Dorsolateral prefrontal cortex (tissue), 120 donors: ENCODE measurements at regions of chr2 and their contacts with region 1.

Region 1: GRCh38 chr2:190408538-190409271 is 550 bp downstream of the MFSD6 start:
- DNase-seq: peak; percentile 45 to 87 (median 78)
- H3K4me3 ChIP-seq: peak overlapping the region; percentile 61 to 91 (median 79)
- H3K27ac ChIP-seq: peak overlapping the region; percentile 72 to 100 (median 97)
- H3K27me3 ChIP-seq: no peaks in the 10 kb centered on the region
- CTCF ChIP-seq: peak in 21 of 56 donors; percentile 4 to 31 (median 20)

Region 2: DNA sequence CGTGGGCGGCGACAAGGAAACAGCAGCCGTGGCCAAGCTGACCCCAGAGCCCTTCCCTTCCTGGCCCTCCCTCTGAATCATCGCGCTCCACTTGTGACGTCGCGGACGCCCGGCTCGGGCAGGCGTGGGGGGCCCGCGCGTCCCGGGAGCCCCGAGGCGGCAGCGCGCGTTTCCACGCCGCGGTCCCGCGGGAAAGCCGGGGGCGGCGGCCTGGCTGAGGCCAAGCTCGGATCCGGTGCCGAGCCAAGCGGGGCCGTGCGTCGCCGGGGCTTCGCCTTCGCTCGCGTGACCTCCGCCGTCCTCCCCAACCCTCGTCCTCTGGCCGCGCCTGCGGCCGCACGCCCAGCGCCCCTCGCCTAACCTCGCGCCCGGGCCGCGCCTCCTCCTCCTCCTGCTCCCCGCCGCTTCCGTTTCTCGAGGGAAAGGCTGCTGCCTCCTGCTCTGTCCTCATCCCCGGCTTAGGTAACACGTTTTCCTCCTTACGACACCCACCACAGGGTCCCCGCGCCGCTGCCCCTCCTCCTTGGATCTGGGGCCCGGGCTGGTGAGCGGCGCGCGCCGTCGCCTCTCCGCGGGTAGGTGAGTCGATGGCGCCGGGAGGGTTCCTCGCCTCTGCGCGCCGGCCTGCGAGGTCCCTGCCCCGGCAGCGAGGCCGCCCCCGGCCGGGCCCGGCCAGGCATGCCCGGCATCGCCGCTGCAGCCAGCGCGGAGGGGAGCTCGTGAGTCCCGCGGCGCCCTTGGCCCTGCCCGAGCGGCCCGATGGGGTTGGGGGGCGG is 65.0 kb before region 1 on chr2 and contains the start of gene INPP1:
- intact Hi-C with region 1: loop called (anchors 5 kb)
- DNase-seq: peak in 9 of 10 donors; percentile 31 to 79 (median 55)
- H3K4me3 ChIP-seq: peak within 1 kb of the TSS; percentile 66 to 94 (median 81)
- H3K27ac ChIP-seq: peak within 1 kb of the TSS; percentile 65 to 98 (median 95)
- H3K27me3 ChIP-seq: no peaks in the 10 kb centered on the region
- CTCF ChIP-seq: no peak
- total RNA-seq, gene INPP1: 32.3 to 82.1 (median 48.4) TPM

Region 3: GRCh38 chr2:190443778-190444481 is 35.2 kb after region 1 on chr2:
- intact Hi-C with region 1: loop called in 1 of 2 experiments (anchors 2 kb)
- DNase-seq: peak in 1 of 10 donors; percentile 26
- H3K4me3 ChIP-seq: no peak overlapping the region
- H3K27ac ChIP-seq: peak overlapping the region in 51 of 59 donors; percentile 2 to 95 (median 67)
- H3K27me3 ChIP-seq: no peaks in the 10 kb centered on the region
- CTCF ChIP-seq: no peak

Region 4: DNA sequence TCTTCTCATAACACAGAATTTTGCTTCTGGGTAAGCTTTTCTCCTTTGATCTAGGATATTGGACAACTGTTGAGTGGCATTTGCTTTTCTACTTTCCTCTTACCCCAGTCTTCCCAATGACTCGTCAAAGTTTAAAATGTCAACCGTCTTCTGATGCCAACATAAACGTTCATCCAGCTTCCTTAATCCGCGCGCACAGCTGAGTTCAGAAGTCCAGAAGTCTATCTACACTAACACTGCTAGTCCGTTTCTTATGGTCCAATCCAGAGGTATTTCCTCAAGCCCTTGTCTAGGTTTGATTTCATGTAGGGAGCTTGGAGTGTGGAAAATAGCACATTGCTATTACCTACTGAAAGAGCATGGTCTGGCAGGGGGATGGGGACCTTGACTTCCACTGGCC is 48.1 kb after region 1 on chr2:
- intact Hi-C with region 1: no loop called
- DNase-seq: no peak
- H3K4me3 ChIP-seq: no peak overlapping the region
- H3K27ac ChIP-seq: peak overlapping the region in 1 of 59 donors; percentile 16
- H3K27me3 ChIP-seq: no peaks in the 10 kb centered on the region
- CTCF ChIP-seq: no peak

Region 5: DNA sequence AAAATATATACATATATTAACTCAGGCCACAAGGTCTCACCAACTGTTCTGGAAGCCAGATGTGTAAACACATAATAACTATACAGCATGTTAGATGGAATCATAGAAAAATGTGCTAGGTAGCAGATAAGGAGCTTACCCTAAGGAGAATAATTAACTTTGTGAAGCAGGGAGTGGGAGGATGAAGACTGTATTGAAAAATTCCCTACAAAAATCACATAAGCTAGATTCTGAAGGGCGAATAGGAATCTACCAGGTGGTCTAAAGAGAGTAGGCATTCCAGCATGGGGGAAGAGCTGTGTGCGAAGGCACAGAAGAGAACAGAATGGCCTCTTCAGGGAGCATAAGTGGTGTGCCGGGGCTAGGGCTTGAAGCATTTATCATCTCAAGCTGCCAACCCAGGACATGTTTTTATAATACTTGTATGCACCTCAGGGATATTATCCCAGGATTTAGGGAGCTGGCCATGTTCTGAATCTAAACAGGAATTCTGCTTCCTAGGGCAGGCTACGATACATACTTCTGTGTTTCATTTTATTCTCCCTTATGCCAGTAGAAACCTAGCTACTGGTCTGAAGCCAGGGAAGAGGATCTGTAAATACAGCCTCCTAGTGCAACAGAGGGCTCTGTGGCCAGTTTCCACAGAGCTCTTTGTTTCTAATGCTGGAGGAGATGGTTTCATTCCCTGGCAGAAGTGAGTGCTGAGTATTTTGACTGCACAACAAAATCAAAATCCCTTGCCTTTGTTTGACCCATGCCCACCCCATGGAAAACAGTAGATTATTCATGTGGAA is 69.2 kb after region 1 on chr2:
- intact Hi-C with region 1: loop called in 1 of 2 experiments (anchors 1 kb)
- DNase-seq: peak in 5 of 10 donors; percentile 16 to 71 (median 54)
- H3K4me3 ChIP-seq: peak overlapping the region in 58 of 59 donors; percentile 0 to 60 (median 36)
- H3K27ac ChIP-seq: peak overlapping the region; percentile 78 to 99 (median 95)
- H3K27me3 ChIP-seq: no peaks in the 10 kb centered on the region
- CTCF ChIP-seq: peak in 11 of 56 donors; percentile 7 to 43 (median 14)

Region 6: DNA sequence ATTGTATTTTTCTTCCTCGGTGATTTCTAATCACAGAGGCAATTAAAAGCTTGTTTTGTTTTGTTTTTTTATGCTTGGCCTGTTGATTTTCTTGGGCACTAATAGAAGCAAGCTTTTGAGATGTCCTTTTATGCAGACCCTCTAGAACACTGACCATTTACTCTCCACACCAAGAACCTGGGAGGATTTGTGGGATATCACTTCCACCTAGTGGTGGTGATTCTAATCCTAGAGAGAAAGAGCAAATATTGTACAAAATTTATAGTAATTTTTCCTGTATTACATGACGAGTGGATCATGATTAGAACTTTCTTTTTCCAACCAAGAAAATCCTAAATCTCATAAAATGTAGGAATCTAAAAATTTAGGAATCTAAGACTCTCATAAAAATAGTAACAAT is 102.4 kb after region 1 on chr2:
- intact Hi-C with region 1: loop called in 1 of 2 experiments (anchors 10 kb)
- DNase-seq: no peak
- H3K4me3 ChIP-seq: no peak overlapping the region
- H3K27ac ChIP-seq: peak overlapping the region in 35 of 59 donors; percentile 2 to 81 (median 53)
- H3K27me3 ChIP-seq: no peaks in the 10 kb centered on the region
- CTCF ChIP-seq: peak; percentile 45 to 90 (median 70)